Activated CD4-positive, alpha-beta memory T cell treated with anti-CD3 and anti-CD28 coated beads for 36 hours (primary cell): ENCODE measurements at regions of chr17 and their contacts with region 1.

Region 1: GRCh38 chr17:29931231-29931932 is 1.4 kb upstream of the SSH2 start:
- DNase-seq: peak; percentile 75
- H3K4me3 Mint-ChIP-seq: no peak overlapping the region
- H3K27ac Mint-ChIP-seq: no peak overlapping the region
- H3K4me1 Mint-ChIP-seq: peaks cover 18% of the 10 kb centered on the region
- H3K27me3 Mint-ChIP-seq: no peaks in the 10 kb centered on the region

Region 2: GRCh38 chr17:29579866-29580771 is 351.3 kb before region 1 on chr17:
- CTCF ChIA-PET with region 1: interaction called, 3 read pairs
- POLR2A ChIA-PET with region 1: no interaction called
- intact Hi-C with region 1: loop called (anchors 10 kb)
- DNase-seq: peak; percentile 94
- H3K4me3 Mint-ChIP-seq: no peak overlapping the region
- H3K27ac Mint-ChIP-seq: peak overlapping the region; percentile 47
- H3K4me1 Mint-ChIP-seq: peaks cover 12% of the 10 kb centered on the region
- H3K27me3 Mint-ChIP-seq: no peaks in the 10 kb centered on the region

Region 3: GRCh38 chr17:29640413-29640812 is 291.0 kb before region 1 on chr17:
- CTCF ChIA-PET with region 1: interaction called, 51 read pairs
- POLR2A ChIA-PET with region 1: interaction called, 3 read pairs
- intact Hi-C with region 1: loop called (anchors 2 kb)
- DNase-seq: no peak
- H3K4me3 Mint-ChIP-seq: no peak overlapping the region
- H3K27ac Mint-ChIP-seq: peak overlapping the region; percentile 3
- H3K4me1 Mint-ChIP-seq: peaks cover 27% of the 10 kb centered on the region
- H3K27me3 Mint-ChIP-seq: no peaks in the 10 kb centered on the region

Region 4: GRCh38 chr17:29821897-29822296 is 109.5 kb before region 1 on chr17:
- CTCF ChIA-PET with region 1: interaction called, 22 read pairs
- POLR2A ChIA-PET with region 1: interaction called, 3 read pairs
- intact Hi-C with region 1: no loop called
- DNase-seq: no peak
- H3K4me3 Mint-ChIP-seq: no peak overlapping the region
- H3K27ac Mint-ChIP-seq: no peak overlapping the region
- H3K4me1 Mint-ChIP-seq: peaks cover 3% of the 10 kb centered on the region
- H3K27me3 Mint-ChIP-seq: no peaks in the 10 kb centered on the region

Region 5: DNA sequence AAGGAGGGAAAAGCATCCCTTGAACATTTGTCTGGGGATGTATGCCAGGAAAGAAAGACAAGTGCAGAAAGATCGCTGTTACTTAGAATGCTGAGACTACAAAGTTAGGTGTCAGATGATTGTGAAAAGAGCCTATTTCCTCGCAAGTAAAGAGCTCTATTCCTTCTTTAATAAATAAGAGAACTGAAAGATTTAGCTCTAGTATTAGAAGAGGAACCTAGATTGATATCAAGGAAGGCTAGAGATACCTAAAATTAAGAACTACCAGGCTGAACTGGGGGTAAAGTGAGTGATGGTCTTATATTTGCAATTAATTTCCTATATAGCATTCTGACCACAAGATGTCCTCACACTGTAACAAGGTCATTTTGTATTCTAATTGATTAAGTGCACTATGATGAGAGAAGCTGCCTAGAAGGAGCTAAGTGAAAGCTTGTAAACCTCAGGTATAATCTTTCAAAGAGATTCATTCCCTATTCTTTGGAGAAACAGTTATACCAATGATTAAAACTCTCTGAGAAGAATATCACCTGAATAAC is 63.7 kb before region 1 on chr17:
- CTCF ChIA-PET with region 1: interaction called, 38 read pairs
- POLR2A ChIA-PET with region 1: no interaction called
- intact Hi-C with region 1: loop called (anchors 1 kb)
- DNase-seq: no peak
- H3K4me3 Mint-ChIP-seq: no peak overlapping the region
- H3K27ac Mint-ChIP-seq: no peak overlapping the region
- H3K4me1 Mint-ChIP-seq: peaks cover 2% of the 10 kb centered on the region
- H3K27me3 Mint-ChIP-seq: no peaks in the 10 kb centered on the region

Region 6: DNA sequence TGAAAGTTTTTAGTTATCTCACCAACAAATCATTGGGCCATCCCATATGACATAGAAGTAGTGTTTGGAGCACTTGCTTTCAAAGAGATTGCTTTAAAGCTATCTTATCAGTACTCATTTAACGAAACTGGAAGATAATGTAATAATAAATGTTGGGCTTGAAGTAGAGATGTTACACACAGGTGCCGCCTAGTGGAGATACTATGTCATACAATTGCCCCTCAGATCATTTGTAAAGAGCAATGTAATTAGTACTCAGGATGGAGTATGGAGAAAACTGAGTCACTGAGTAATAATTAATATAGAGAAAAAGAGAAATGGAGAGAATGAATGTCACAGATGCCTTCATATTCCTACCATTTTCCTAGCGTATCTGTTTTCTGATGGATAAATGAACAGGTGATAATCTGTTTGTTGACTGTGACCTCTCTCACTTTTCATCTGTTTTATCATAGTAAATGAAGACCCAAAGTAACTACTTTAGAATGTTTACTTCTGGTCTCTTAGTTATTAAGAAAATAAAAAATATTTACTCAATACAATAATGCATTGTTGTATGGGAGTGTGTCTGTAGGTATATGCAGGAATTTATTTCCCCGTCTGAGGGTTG is 90.4 kb after region 1 on chr17:
- CTCF ChIA-PET with region 1: interaction called, 13 read pairs
- POLR2A ChIA-PET with region 1: no interaction called
- intact Hi-C with region 1: loop called (anchors 2 kb)
- DNase-seq: peak; percentile 23
- H3K4me3 Mint-ChIP-seq: no peak overlapping the region
- H3K27ac Mint-ChIP-seq: no peak overlapping the region
- H3K4me1 Mint-ChIP-seq: no peaks in the 10 kb centered on the region
- H3K27me3 Mint-ChIP-seq: no peaks in the 10 kb centered on the region